ENCODE measurements at regions of chr5 and their contacts with region 1.

Region 1: GRCh38 chr5:143166661-143167420 is 236.6 kb downstream of the NR3C1 start:
- DNase-seq: no peak
- H3K4me3 ChIP-seq: no peak overlapping the region
- CTCF ChIP-seq: no peak

Region 2: GRCh38 chr5:143153332-143154119 is 13.3 kb before region 1 on chr5:
- CTCF ChIA-PET with region 1: interaction called, 23 read pairs
- POLR2A ChIA-PET with region 1: no interaction called
- DNase-seq: peak; percentile 83
- H3K4me3 ChIP-seq: no peak overlapping the region
- CTCF ChIP-seq: no peak

Region 3: GRCh38 chr5:143222287-143223231 is 55.7 kb after region 1 on chr5:
- CTCF ChIA-PET with region 1: no interaction called
- POLR2A ChIA-PET with region 1: no interaction called
- DNase-seq: no peak
- H3K4me3 ChIP-seq: no peak overlapping the region
- CTCF ChIP-seq: no peak

Region 4: DNA sequence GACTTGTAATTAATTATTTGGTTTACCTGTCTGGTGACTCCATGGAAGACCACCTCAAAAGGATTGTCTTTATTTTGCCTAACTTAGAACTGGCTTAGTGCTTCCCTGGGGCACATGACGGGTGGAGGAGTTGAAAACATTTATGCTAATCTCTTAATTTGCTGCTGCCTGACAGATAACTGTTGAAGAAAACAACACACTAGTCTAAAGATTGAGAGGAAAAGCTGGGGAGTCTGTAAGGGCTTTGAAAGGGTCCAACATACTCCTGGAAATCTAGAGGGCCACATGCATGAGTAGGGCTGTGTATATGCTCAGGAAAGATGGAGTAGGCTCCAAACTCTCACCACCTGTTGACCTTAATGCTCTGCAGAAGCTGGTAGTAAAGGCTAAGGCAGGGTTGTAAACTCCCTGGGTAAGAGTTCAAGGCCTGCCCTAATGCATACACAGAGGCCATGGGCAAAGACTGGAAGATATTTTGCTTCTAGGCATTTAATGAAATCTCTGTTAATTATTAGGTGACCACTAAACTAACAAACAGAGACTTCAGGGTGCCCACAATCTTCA is 195.9 kb after region 1 on chr5:
- CTCF ChIA-PET with region 1: no interaction called
- POLR2A ChIA-PET with region 1: no interaction called
- DNase-seq: no peak
- H3K4me3 ChIP-seq: no peak overlapping the region
- CTCF ChIP-seq: no peak